ENCODE measurements at regions of chr6 and their contacts with region 1.

Region 1: DNA sequence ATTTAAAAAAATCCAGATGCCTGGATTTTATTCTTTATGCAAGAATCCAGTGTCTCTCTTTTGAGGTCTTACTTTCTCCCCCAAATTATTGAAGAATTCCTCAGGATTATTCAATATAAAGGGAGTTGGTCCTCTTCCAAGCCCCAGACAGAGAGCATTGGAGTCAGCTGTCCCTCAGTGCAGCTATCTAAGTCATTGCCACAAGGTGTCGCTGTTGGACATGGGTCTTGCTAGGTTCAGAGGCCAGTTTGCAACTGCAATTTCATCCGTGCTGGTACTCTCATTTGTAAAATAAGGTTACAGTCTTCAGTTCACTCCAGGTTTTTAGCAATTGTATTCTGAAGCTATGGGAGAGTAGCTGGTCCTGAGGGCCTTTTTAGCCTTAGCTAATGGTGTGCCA is 27.8 kb downstream of the CCN2 start:
- DNase-seq: no peak
- ATAC-seq: peak; percentile 45

Region 2: GRCh38 chr6:132161283-132161682 is 237.9 kb after region 1 on chr6:
- intact Hi-C with region 1: loop called (anchors 5 kb)
- DNase-seq: no peak
- ATAC-seq: peak; percentile 59

Region 3: DNA sequence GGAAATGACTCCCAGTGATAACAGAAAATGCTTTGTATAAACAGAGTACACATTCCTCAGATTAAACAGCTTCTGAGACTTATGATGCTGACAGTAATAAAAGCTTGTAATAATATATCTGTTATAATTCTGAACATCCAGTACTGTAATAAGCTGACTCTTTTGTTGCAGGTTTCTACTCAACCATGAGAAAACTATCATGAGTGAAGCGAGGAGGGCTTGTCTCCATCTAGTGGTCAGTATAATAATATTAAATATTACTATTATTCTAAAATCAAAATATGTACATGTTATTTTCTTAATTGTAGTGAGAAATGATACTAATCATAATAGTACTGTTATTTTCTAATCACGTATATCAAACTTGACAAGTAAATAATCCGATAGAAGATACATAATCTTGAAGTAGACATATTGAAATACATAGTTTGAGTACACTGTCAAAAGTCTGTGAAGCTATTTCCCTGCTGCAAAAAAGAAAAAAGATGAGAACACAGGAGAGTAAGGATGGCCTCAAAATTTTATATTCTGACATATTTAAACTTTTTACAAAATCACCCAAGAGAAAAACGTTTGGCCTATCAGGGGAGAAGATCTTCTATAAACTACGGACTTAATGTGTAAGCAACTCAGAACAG is 294.8 kb after region 1 on chr6:
- intact Hi-C with region 1: loop called (anchors 5 kb)
- DNase-seq: no peak
- ATAC-seq: no peak

Measured in left ventricle myocardium superior (tissue), 1 donor.